GM23248 (cell line): ENCODE measurements at regions of chr6 and their contacts with region 1.

Region 1: GRCh38 chr6:85354761-85355618 is 94.9 kb upstream of the NT5E start:
- DNase-seq: peak; percentile 85
- H3K4me3 ChIP-seq: no peak overlapping the region
- H3K27ac ChIP-seq: no peak overlapping the region
- H3K4me1 ChIP-seq: peaks cover 13% of the 10 kb centered on the region
- H3K27me3 ChIP-seq: no peaks in the 10 kb centered on the region

Region 2: DNA sequence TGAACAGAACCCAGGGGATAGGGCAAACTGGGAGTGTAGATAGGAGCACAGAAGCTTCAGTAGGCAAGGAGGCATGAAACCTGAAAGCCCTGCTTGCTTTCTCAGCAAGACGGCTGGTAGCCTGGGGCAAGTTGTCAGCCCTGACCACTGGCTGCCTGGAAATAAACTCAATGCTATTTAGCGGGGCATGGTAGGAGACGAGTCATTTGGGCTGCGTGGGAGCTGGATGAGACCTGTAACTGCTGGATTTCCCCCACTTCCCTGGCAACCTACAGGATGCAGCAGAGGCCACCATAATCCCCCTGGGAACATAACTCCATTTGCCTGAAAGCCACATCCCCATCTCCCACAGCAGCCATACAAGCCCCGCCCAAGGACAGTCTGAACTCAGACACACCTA is 258.0 kb before region 1 on chr6:
- in situ Hi-C with region 1: no loop called
- DNase-seq: peak; percentile 30
- H3K4me3 ChIP-seq: no peak overlapping the region
- H3K27ac ChIP-seq: no peak overlapping the region
- H3K4me1 ChIP-seq: no peaks in the 10 kb centered on the region
- H3K27me3 ChIP-seq: no peaks in the 10 kb centered on the region

Region 3: DNA sequence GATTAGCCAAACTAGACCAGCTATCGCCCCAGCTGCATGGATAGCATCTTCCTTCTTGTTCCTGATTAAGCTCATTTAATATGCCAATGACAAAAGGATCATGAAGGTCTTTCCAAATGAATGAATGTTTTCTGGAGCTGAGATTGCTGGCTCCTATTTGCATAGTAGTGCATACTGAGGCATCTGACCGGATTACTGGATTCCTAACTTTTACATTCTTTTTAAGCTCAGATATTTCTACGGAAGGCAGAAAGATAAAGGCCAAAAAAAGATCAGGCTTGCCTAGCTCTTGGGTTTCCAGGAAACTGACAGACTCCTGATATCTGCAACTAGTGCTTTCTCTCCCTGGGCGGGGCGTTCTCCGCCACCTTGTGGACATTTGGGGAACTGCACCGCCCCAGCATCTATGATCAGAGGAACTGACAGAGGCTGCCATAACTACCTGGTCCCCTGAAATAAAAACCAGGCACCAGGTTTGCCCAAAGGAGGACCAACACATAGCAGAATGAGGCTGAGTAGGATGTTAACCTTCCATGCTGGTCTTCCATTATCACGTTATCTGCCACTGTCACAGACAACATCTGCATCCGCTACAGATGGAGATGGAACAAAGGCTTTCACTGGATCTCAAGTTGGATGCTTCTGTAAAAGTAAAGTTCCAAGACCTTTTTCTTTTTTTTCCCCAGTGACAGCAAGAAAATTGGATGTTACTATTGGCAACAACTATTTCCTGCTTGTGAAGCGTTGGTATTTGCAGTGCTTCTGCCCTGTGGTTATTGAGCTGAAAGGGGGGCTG is 128.1 kb after region 1 on chr6:
- in situ Hi-C with region 1: loop called (anchors 10 kb)
- DNase-seq: peak; percentile 74
- H3K4me3 ChIP-seq: peak overlapping the region; percentile 37
- H3K27ac ChIP-seq: peak overlapping the region; percentile 78
- H3K4me1 ChIP-seq: peaks cover 36% of the 10 kb centered on the region
- H3K27me3 ChIP-seq: no peaks in the 10 kb centered on the region

Region 4: GRCh38 chr6:85612690-85613474 is 257.9 kb after region 1 on chr6:
- in situ Hi-C with region 1: no loop called
- DNase-seq: no peak
- H3K4me3 ChIP-seq: no peak overlapping the region
- H3K27ac ChIP-seq: no peak overlapping the region
- H3K4me1 ChIP-seq: peaks cover 8% of the 10 kb centered on the region; the same call in 1 of the 2 replicates
- H3K27me3 ChIP-seq: no peaks in the 10 kb centered on the region